GM10248 (cell line): ENCODE measurements at regions of chr1 and their contacts with region 1.

Region 1: GRCh38 chr1:92792340-92792782 is 7.5 kb upstream of the EVI5 start:
- DNase-seq: no peak
- CTCF ChIP-seq: no peak

Region 2: GRCh38 chr1:92458146-92458545 is 334.2 kb before region 1 on chr1:
- CTCF ChIA-PET with region 1: no interaction called
- POLR2A ChIA-PET with region 1: no interaction called
- DNase-seq: no peak
- CTCF ChIP-seq: no peak

Region 3: GRCh38 chr1:92817986-92818764 is 25.8 kb after region 1 on chr1:
- CTCF ChIA-PET with region 1: interaction called, 18 read pairs
- POLR2A ChIA-PET with region 1: no interaction called
- DNase-seq: peak; percentile 46
- CTCF ChIP-seq: peak; percentile 82

Region 4: DNA sequence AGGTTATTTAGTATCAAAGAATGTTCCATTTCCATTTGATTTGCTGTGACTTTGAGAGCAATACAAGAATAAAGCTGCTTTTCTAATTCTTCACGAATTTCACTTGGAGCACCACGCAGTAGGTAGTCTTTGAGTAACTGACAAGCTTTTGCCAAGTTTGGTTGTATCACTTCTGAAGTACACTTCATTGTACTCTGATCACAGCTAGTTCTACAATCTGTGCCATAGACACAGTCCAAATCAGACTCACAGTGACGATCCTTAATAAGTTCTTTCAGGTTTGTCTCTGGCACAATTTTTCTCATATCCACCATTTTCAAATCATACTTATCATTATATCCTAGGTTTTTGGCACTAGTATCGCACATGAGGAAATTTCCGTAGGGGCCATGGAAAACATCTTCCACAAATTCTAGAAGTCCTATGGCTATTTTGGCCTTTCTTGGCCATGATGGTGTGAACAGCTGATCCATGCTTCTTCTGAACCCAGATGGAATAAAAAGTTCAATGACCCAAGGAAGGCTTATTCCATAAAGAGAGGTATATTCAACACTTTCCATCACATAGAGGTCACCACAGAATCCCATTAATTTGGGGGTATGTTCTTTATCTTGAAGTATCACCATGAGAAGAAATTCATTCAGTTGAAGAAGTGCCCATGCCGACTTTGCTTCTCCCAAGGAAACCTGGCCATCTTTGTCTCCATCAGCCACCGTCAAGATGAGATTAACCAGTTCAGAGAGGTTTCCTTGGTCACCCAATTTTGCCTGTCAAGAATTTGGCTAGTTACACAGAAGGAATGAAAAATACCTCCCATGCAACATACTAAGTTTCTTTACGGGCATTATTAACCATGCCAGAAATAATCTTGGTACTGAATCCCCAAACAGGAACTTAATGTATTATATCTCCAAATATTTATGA is 51.3 kb after region 1 on chr1:
- CTCF ChIA-PET with region 1: no interaction called
- POLR2A ChIA-PET with region 1: interaction called, 10 read pairs
- DNase-seq: no peak
- CTCF ChIP-seq: no peak

Region 5: GRCh38 chr1:93447516-93448291 is 655.3 kb after region 1 on chr1 and contains the start of gene FNBP1L:
- CTCF ChIA-PET with region 1: no interaction called
- POLR2A ChIA-PET with region 1: no interaction called
- DNase-seq: peak; percentile 62
- CTCF ChIP-seq: no peak